ENCODE measurements at regions of chr22 and their contacts with region 1.

Region 1: GRCh38 chr22:19523240-19524169 is 705 bp downstream of the CLDN5 start:
- DNase-seq: peak in 2 of 3 donors; percentile 58 to 80
- H3K4me3 ChIP-seq: peak overlapping the region; percentile 24 to 77 (median 53)
- H3K27ac ChIP-seq: no peak overlapping the region
- H3K4me1 ChIP-seq: peaks cover 0 to 32% (median 29%) of the 10 kb centered on the region in 4 experiments
- H3K27me3 ChIP-seq: peaks cover 0 to 27% (median 2%) of the 10 kb centered on the region in 5 experiments

Region 2: GRCh38 chr22:19325296-19325948 is 198.1 kb before region 1 on chr22:
- CTCF ChIA-PET with region 1: no interaction called
- POLR2A ChIA-PET with region 1: no interaction called
- DNase-seq: no peak
- H3K4me3 ChIP-seq: no peak overlapping the region
- H3K27ac ChIP-seq: no peak overlapping the region
- H3K4me1 ChIP-seq: no peaks in the 10 kb centered on the region
- H3K27me3 ChIP-seq: no peaks in the 10 kb centered on the region

Region 3: DNA sequence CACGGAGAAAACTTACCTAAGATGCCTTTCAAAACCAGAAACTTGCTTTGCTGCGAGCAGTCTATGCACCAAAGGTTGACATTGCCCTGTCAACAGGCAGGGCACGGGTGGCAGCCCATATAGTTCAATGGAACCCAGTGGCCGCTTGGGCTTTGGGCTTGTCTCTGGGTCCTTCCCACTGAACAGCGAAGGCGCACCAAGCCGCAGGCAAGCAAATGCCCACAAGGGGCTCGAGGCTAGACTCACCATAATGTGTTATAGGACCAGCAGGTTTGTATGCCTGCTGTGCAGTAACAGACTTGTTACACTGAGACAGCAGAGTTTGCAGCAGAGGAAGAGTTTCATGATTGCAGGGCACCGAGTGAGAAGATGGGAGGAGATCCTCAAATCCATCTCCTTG is 19.6 kb before region 1 on chr22:
- CTCF ChIA-PET with region 1: interaction called, 14 read pairs
- POLR2A ChIA-PET with region 1: no interaction called
- DNase-seq: peak in 1 of 3 donors; percentile 32
- H3K4me3 ChIP-seq: no peak overlapping the region
- H3K27ac ChIP-seq: no peak overlapping the region
- H3K4me1 ChIP-seq: peaks cover 0 to 21% (median 17%) of the 10 kb centered on the region in 4 experiments
- H3K27me3 ChIP-seq: no peaks in the 10 kb centered on the region

Region 4: DNA sequence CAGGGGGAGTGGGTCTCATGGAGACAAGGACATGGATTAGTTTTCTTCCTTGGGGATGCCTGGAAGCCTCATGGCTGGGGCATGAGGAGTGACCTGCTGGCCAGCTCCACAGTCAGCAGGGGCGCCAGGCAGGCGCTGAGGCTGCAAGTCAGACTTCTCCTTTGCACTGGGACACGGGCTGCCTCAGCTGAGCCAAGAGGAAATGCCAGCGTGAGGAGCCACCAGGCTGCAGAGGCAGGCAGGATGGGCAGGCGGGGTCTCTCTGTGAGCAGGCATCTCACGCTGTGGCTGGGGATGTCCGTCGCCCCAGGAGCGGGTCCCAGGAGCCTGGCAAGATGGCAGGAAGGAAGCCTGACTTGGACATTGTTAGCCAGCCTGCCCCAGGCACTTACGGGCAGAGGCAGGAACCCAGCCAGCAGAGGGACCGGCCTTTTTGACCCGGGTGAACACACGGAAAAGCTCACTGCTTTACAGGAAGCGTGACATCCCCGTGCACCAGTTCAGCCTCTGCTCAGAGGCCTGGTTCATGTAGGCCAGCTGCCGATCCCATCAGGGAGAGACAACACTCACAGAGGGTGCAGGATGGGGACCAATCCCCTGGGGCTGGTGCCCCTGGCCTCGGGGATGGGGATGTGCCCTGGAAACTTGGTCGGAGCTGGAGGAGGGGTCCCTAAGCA is 321.0 kb after region 1 on chr22:
- CTCF ChIA-PET with region 1: no interaction called
- POLR2A ChIA-PET with region 1: no interaction called
- DNase-seq: peak; percentile 50 to 85 (median 79)
- H3K4me3 ChIP-seq: peak overlapping the region in 5 of 7 experiments; percentile 30 to 62 (median 57)
- H3K27ac ChIP-seq: no peak overlapping the region
- H3K4me1 ChIP-seq: peaks cover 0 to 23% (median 21%) of the 10 kb centered on the region in 4 experiments
- H3K27me3 ChIP-seq: no peaks in the 10 kb centered on the region

Measured in common myeloid progenitor, CD34-positive (primary cell).